ENCODE measurements at regions of chr10 and their contacts with region 1.

Region 1: GRCh38 chr10:63878428-63878827 is 357.2 kb downstream of the REEP3 start:
- DNase-seq: no peak
- H3K4me3 ChIP-seq: no peak overlapping the region
- H3K27ac ChIP-seq: no peak overlapping the region
- H3K4me1 ChIP-seq: no peaks in the 10 kb centered on the region
- H3K27me3 ChIP-seq: no peaks in the 10 kb centered on the region
- CTCF ChIP-seq: no peak
- POLR2A ChIP-seq: no peak

Region 2: DNA sequence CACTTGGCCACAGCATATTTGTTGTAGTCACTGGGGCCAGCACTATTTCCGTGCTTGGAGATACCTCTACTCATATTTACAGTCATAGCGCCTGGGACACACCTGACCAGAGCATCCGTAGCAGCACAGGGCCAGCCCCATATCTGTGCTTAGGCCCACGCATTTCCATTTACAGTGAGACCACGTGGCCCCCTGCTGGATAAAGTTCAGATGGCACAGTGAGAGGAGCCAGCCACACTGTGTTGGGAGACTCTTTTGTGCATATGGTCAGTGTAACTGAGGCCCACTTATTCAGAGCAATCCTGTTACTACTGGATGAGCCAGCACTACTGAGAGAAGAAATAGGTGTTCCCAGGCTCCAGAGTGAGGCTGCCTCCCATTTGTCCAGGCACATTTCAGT is 98.1 kb after region 1 on chr10:
- intact Hi-C with region 1: loop called (anchors 10 kb)
- DNase-seq: peak; percentile 33
- H3K4me3 ChIP-seq: no peak overlapping the region
- H3K27ac ChIP-seq: no peak overlapping the region
- H3K4me1 ChIP-seq: no peaks in the 10 kb centered on the region
- H3K27me3 ChIP-seq: no peaks in the 10 kb centered on the region
- CTCF ChIP-seq: peak; percentile 27 to 60 (median 28)
- POLR2A ChIP-seq: no peak